ENCODE measurements at regions of chr12 and their contacts with region 1.

Region 1: GRCh38 chr12:63826006-63826585 is 18.4 kb upstream of the SRGAP1 start:
- DNase-seq: no peak
- ATAC-seq: peak; percentile 82
- H3K4me3 ChIP-seq: no peak overlapping the region
- H3K27ac ChIP-seq: no peak overlapping the region
- H3K4me1 ChIP-seq: no peaks in the 10 kb centered on the region
- H3K27me3 ChIP-seq: no peaks in the 10 kb centered on the region
- CTCF ChIP-seq: peak; percentile 86

Region 2: GRCh38 chr12:63836936-63837335 is 10.8 kb after region 1 on chr12:
- CTCF ChIA-PET with region 1: no interaction called
- POLR2A ChIA-PET with region 1: no interaction called
- in situ Hi-C with region 1: no loop called
- intact Hi-C with region 1: no loop called
- DNase-seq: no peak
- ATAC-seq: no peak
- H3K4me3 ChIP-seq: no peak overlapping the region
- H3K27ac ChIP-seq: no peak overlapping the region
- H3K4me1 ChIP-seq: peaks cover 4% of the 10 kb centered on the region; the same call in 1 of the 2 replicates
- H3K27me3 ChIP-seq: no peaks in the 10 kb centered on the region
- CTCF ChIP-seq: no peak

Region 3: DNA sequence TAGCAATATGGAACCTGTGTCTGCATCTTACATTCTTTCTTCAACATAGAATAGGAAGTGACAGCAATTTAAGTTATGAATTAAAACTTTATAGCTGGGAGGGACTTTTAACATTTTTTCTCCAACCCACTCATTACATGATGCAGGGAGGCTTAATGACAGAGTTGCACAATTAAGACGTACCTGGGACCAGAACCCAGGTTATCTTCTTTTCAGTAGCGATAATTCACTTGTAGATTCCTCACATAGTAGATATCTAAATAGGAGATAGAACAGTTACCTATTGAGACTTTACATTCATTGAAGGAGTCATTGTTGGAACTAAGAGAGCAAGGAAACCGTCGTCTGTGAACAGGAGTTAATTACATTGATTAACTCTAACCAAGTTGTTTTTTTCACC is 23.5 kb after region 1 on chr12:
- CTCF ChIA-PET with region 1: interaction called, 14 read pairs
- POLR2A ChIA-PET with region 1: no interaction called
- in situ Hi-C with region 1: no loop called
- intact Hi-C with region 1: no loop called
- DNase-seq: no peak
- ATAC-seq: no peak
- H3K4me3 ChIP-seq: no peak overlapping the region
- H3K27ac ChIP-seq: peak overlapping the region; percentile 67
- H3K4me1 ChIP-seq: peaks cover 48% of the 10 kb centered on the region
- H3K27me3 ChIP-seq: no peaks in the 10 kb centered on the region
- CTCF ChIP-seq: no peak

Region 4: DNA sequence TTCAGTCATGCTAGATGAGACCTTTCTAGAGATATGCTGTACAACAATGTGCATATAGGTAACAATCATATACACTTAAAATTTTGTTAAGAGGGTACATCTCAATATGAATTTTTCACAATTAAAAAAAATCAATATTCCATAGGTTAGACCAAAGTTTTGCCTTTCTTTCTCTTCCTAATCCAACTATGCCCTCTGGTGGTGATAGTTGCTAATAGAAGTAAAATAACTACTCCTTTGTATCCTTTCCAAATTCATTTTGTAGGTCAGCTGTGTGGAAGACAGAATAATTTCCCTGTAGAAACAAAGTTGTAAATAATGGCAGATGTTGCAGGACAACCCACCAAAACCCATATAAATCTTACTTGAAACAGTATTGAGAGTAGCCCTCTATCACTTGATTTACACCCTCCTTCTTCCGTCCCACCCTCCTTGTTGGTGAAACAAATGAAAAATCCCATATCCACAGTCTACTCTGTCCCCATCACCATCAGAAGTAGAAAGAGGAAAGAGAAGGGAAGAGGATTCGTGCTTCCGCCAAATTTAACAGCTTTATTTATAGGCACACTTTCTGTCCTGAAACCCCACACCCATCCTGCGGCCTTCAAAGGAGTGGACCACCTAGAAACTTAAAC is 430.2 kb after region 1 on chr12:
- CTCF ChIA-PET with region 1: interaction called, 4 read pairs
- POLR2A ChIA-PET with region 1: no interaction called
- in situ Hi-C with region 1: no loop called
- intact Hi-C with region 1: loop called (anchors 1 kb)
- DNase-seq: no peak
- ATAC-seq: peak; percentile 60
- H3K4me3 ChIP-seq: no peak overlapping the region
- H3K27ac ChIP-seq: no peak overlapping the region
- H3K4me1 ChIP-seq: no peaks in the 10 kb centered on the region
- H3K27me3 ChIP-seq: no peaks in the 10 kb centered on the region
- CTCF ChIP-seq: peak; percentile 66; the same call in 1 of the 2 replicates

Region 5: DNA sequence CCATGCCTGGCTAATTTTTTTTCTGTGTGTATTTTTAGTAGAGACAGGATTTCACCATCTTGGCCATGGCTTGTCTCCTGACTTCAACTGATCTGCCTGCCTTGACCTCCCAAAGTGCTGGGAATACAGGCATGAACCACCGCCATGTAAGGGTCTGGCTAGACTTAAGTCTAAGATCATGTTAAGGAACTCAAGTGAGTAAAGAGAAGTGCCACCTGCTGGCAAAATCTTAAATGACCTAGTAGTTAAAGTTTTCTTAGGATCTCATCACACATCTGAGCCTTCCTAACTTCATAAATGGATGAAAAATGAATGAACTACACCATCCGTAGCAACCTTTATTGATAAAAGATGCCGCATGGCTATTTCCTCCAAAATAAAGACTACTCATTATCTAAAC is 566.1 kb after region 1 on chr12:
- CTCF ChIA-PET with region 1: no interaction called
- POLR2A ChIA-PET with region 1: no interaction called
- in situ Hi-C with region 1: no loop called
- intact Hi-C with region 1: loop called (anchors 5 kb)
- DNase-seq: no peak
- ATAC-seq: peak; percentile 56
- H3K4me3 ChIP-seq: no peak overlapping the region
- H3K27ac ChIP-seq: no peak overlapping the region
- H3K4me1 ChIP-seq: peaks cover 7% of the 10 kb centered on the region
- H3K27me3 ChIP-seq: no peaks in the 10 kb centered on the region
- CTCF ChIP-seq: peak; percentile 68